ENCODE measurements at regions of chr5 and their contacts with region 1.

Region 1: DNA sequence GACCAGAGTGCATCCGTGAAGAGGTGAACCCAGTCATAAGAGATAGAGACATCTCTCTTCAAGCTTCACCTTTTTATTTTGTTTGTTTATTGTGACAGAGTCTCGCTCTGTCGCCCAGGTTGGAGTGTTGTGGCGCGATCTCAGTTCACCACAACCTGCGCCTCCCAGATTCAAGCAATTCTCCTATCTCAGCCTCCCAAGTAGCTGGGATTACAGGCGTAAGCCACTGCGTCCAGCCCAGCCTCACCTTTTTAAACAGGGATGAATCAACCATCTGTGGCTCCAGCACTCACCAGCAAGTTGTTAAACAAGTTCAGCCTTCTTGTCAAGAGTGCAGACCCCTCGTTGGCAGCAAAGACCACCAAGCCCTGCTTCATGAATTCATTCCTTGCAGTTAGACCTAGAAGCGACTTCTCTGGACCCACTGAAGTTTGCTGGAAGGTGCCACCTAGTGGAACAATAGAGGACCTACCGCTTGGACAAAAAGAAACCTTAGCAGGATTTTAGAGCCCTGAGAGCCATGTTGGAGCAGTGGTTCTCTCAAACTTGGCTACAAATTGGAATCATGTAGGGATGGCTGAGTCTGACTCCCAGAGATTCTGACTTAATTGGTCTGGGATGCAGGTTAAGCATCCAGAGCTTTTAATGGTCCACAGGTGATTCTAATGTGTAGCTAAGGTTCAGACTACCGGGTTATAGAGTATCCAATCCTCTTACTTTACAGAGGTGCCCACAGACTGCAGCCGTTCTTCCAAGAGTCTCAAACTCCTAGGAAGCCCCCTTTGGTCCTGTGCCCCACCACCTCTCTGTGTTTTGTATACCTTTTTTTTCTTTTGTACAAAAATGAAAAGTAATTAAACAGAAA is 10.5 kb upstream of the GALNT10 start:
- DNase-seq: peak in 26 of 42 donors; percentile 27 to 76 (median 55)

Region 2: GRCh38 chr5:154072414-154073171 is 107.5 kb before region 1 on chr5:
- intact Hi-C with region 1: loop called (anchors 10 kb)
- DNase-seq: peak; percentile 51 to 95 (median 84)

Measured in head of caudate nucleus (tissue), 42 donors.